ENCODE measurements at regions of chr17 and their contacts with region 1.

Region 1: GRCh38 chr17:77516902-77517301 is 376.1 kb downstream of the SEC14L1 start:
- DNase-seq: no peak

Region 2: GRCh38 chr17:77420804-77421629 is 95.9 kb before region 1 on chr17:
- in situ Hi-C with region 1: no loop called
- DNase-seq: no peak

Region 3: GRCh38 chr17:77590951-77591735 is 74.2 kb after region 1 on chr17:
- in situ Hi-C with region 1: loop called (anchors 10 kb)
- DNase-seq: no peak

Region 4: GRCh38 chr17:77696721-77697460 is 180.0 kb after region 1 on chr17:
- in situ Hi-C with region 1: no loop called
- DNase-seq: no peak

Measured in SK-MEL-5 (cell line).